ENCODE measurements at regions of chr12 and their contacts with region 1.

Region 1: DNA sequence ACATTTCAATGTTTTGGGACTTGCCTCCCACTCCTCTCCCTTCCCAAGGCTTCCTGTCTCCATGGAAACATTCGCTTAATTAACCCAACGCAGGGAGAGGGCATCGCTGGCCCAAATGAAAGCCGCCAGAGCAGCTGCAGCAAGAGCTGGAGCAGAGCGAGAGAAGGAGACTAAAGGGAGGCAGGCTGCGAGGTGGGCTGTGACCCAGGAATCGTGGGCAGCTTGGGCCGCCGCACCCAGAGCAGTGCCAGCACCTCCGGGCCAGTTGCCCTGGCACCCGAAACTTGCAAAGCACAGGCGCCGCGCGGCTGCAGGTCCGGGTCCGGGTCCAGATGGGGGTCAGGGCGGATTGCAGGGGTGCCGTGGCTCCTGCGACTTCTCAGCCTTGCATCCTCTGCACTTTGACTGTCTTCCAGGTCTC is 43.5 kb upstream of the PTPRQ start:
- DNase-seq: no peak
- H3K4me3 Mint-ChIP-seq: peak overlapping the region; percentile 35
- H3K27ac Mint-ChIP-seq: no peak overlapping the region
- H3K4me1 Mint-ChIP-seq: peaks cover 8% of the 10 kb centered on the region
- H3K27me3 Mint-ChIP-seq: no peaks in the 10 kb centered on the region
- CTCF ChIP-seq: no peak

Region 2: DNA sequence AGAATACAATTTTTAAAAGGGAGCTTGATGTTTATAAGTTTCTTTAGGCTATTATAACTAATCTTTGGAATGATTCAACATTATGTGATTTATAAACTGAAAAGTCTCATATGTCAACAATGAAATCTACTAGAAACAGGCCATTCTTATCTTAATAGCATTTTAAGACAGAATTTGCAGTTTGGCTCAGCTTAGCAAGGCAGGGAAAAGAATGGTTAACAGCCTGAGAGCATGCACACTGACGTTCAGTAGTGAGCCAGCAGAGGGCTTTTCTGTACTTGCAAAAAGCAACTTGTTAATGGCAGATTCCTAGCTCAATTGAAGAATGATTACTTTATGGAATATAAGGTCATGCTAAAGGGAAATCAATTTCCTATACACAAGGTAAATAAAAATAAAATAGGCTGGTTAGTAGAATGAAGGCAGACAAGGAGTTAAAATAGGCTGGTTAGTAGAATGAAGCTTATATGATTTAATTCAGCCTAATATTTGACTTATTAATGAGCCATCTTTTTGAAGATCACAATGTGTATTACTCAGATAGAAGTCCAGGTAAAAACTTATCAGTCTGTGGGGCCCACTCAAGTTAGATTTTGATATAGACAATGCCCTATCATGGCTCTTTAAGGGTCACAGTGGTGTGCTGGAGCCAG is 205.4 kb before region 1 on chr12:
- CTCF ChIA-PET with region 1: no interaction called
- intact Hi-C with region 1: loop called (anchors 10 kb)
- DNase-seq: peak; percentile 48
- H3K4me3 Mint-ChIP-seq: no peak overlapping the region
- H3K27ac Mint-ChIP-seq: no peak overlapping the region
- H3K4me1 Mint-ChIP-seq: no peaks in the 10 kb centered on the region
- H3K27me3 Mint-ChIP-seq: no peaks in the 10 kb centered on the region
- CTCF ChIP-seq: peak; percentile 51